OCI-LY7 (cell line): ENCODE measurements at regions of chr2 and their contacts with region 1.

Region 1: GRCh38 chr2:8681786-8682692 is at the start of gene ID2:
- DNase-seq: peak; percentile 100
- H3K4me3 ChIP-seq: peak within 1 kb of the TSS; percentile 97
- H3K27ac ChIP-seq: peak within 1 kb of the TSS; percentile 91
- H3K4me1 ChIP-seq: peaks cover 39% of the 10 kb centered on the region
- CTCF ChIP-seq: no peak
- total RNA-seq, gene ID2: 439 and 498 TPM in 2 replicates

Region 2: GRCh38 chr2:7427293-7428060 is 1254.6 kb before region 1 on chr2:
- CTCF ChIA-PET with region 1: no interaction called
- POLR2A ChIA-PET with region 1: interaction called, 5 read pairs
- intact Hi-C with region 1: loop called (anchors 1 kb)
- DNase-seq: peak; percentile 92
- H3K4me3 ChIP-seq: no peak overlapping the region
- H3K27ac ChIP-seq: no peak overlapping the region
- H3K4me1 ChIP-seq: peaks cover 48% of the 10 kb centered on the region
- CTCF ChIP-seq: peak; percentile 91

Region 3: DNA sequence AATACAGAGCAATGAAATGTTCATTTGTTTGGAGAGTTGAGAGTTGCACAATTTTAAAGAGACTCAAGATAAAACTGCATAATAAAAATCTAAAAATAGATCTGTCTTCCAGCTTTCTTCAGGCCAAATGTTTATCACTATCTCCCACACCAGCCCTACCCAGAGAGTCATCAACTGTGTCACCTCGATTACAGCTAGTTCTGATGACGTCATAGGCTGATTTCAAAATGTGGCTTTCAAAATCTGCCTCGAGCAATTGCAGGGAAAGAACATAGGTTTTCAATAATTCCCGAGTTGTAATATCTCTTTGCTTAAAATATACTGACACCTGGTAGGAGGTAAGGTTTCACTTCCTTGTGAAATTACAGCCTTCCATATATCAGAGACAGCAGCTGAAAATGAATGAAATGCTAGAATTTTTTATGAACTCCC is 677.8 kb before region 1 on chr2:
- CTCF ChIA-PET with region 1: no interaction called
- POLR2A ChIA-PET with region 1: no interaction called
- intact Hi-C with region 1: loop called (anchors 5 kb)
- DNase-seq: peak; percentile 29
- H3K4me3 ChIP-seq: no peak overlapping the region
- H3K27ac ChIP-seq: no peak overlapping the region
- H3K4me1 ChIP-seq: peaks cover 31% of the 10 kb centered on the region
- CTCF ChIP-seq: no peak

Region 4: DNA sequence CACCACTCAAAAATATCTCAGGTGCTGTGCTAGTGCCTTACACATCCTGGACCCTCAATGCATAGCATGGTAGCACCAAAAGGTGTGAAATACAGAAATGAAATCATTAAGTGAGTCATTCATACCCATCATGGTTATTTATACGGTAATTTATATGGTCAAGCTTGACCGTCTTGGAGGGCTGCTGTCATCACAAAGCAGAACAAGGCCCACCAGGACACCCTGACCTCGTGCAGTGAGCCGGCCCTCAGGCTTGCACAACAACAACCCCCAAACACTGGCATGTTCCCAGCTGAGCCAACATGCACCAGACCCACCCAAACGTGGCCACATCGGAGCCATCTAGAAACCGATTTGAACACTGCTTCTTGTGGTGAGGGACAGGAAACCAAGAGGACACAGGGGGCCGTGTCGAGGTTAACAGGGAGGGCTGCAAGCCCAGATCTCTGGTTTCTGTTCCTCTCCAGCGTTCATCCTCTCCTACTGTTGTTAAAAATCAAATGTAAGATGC is 378.7 kb before region 1 on chr2:
- CTCF ChIA-PET with region 1: no interaction called
- POLR2A ChIA-PET with region 1: interaction called, 10 read pairs
- intact Hi-C with region 1: loop called (anchors 2 kb)
- DNase-seq: peak; percentile 96
- H3K4me3 ChIP-seq: peak overlapping the region; percentile 36
- H3K27ac ChIP-seq: peak overlapping the region; percentile 76
- H3K4me1 ChIP-seq: peaks cover 71% of the 10 kb centered on the region
- CTCF ChIP-seq: peak; percentile 70

Region 5: GRCh38 chr2:8534729-8535468 is 147.1 kb before region 1 on chr2:
- CTCF ChIA-PET with region 1: no interaction called
- POLR2A ChIA-PET with region 1: interaction called, 15 read pairs
- intact Hi-C with region 1: no loop called
- DNase-seq: peak; percentile 70
- H3K4me3 ChIP-seq: no peak overlapping the region
- H3K27ac ChIP-seq: peak overlapping the region; percentile 58
- H3K4me1 ChIP-seq: peaks cover 69% of the 10 kb centered on the region
- CTCF ChIP-seq: no peak

Region 6: GRCh38 chr2:8583400-8584173 is 98.5 kb before region 1 on chr2:
- CTCF ChIA-PET with region 1: interaction called, 4 read pairs
- POLR2A ChIA-PET with region 1: interaction called, 93 read pairs
- intact Hi-C with region 1: loop called (anchors 2 kb)
- DNase-seq: peak; percentile 99
- H3K4me3 ChIP-seq: peak overlapping the region; percentile 61
- H3K27ac ChIP-seq: peak overlapping the region; percentile 98
- H3K4me1 ChIP-seq: peaks cover 97% of the 10 kb centered on the region
- CTCF ChIP-seq: no peak